ENCODE measurements at regions of chr14 and their contacts with region 1.

Region 1: GRCh38 chr14:52801015-52801712 is 9.8 kb upstream of the GNPNAT1 start:
- DNase-seq: no peak
- H3K4me3 ChIP-seq: peak overlapping the region in 1 of 2 donors; percentile 7
- H3K27ac ChIP-seq: peak overlapping the region; percentile 69 to 79
- H3K4me1 ChIP-seq: peaks cover 0 to 45% (median 0%) of the 10 kb centered on the region in 4 donors
- H3K27me3 ChIP-seq: no peaks in the 10 kb centered on the region
- CTCF ChIP-seq: no peak

Region 2: DNA sequence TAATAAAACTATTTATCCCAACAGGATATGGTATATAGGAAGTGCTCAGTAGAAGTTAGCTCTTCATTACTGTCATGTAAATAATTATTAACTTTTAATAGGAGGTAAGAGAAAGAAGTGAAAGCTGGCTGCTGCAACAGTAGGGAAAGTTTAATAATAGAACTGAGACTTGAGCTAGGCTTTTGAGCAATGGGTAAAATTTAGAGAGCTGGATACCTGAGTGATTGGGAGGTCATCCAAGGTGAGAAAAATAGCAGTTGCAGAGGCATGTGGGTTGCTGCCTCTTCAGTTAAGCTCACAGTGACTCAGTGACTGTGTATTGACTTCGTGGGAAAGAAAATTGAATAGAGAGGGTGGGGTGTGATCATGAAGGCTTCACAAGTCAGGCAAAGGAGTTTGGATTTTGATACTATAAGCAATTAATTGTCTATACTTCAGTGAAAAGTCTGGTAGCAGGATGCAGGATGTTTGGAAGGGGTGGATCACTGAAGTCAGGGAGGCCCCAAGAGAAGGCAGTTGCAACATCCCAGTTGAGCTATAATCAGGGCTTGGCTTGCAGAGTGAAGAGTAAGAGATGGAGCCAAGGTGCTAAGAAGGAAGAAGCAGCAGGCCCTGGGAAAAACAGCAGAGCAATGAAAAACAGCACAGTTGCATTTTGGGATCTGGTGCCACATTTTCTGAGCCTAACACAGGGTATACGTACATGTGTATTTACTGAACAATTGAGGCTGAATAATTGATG is 1321.4 kb before region 1 on chr14:
- intact Hi-C with region 1: loop called (anchors 5 kb)
- DNase-seq: peak in 1 of 2 donors; percentile 55
- H3K4me3 ChIP-seq: no peak overlapping the region
- H3K27ac ChIP-seq: no peak overlapping the region
- H3K4me1 ChIP-seq: no peaks in the 10 kb centered on the region
- H3K27me3 ChIP-seq: no peaks in the 10 kb centered on the region
- CTCF ChIP-seq: no peak

Measured in tibial artery (tissue), 4 donors.